ENCODE measurements at regions of chr7 and their contacts with region 1.

Region 1: DNA sequence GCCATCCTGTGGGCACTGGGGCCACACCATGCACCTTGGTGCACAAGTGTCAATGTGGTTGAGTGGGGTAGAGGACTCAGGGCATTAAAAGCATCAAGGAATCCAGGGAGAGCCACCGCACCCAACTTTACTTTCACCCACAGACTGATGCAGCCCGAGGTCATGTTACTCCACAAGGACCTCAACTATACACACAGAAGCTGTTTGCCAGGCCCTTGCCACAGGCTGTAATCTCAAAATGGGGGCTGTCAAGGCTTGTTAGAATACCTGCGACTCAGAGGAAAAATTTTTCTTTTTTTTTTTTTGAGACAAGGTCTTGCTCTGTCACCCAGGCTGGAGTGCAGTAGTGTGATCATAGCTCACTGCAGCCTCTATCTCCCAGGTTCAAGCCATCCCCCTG is 26.5 kb upstream of the KCTD7 start:
- DNase-seq: no peak
- ATAC-seq: no peak
- H3K4me3 ChIP-seq: no peak overlapping the region
- H3K27ac ChIP-seq: no peak overlapping the region
- H3K4me1 ChIP-seq: no peaks in the 10 kb centered on the region
- H3K27me3 ChIP-seq: no peaks in the 10 kb centered on the region
- CTCF ChIP-seq: no peak

Region 2: GRCh38 chr7:66326501-66327180 is 275.5 kb before region 1 on chr7:
- CTCF ChIA-PET with region 1: no interaction called
- POLR2A ChIA-PET with region 1: no interaction called
- in situ Hi-C with region 1: no loop called
- intact Hi-C with region 1: no loop called
- DNase-seq: no peak
- ATAC-seq: peak; percentile 90
- H3K4me3 ChIP-seq: no peak overlapping the region
- H3K27ac ChIP-seq: peak overlapping the region; percentile 64
- H3K4me1 ChIP-seq: peaks cover 9% of the 10 kb centered on the region
- H3K27me3 ChIP-seq: no peaks in the 10 kb centered on the region
- CTCF ChIP-seq: no peak

Region 3: GRCh38 chr7:66627151-66627681 is 25.1 kb after region 1 on chr7:
- CTCF ChIA-PET with region 1: interaction called, 11 read pairs
- POLR2A ChIA-PET with region 1: no interaction called
- in situ Hi-C with region 1: no loop called
- intact Hi-C with region 1: no loop called
- DNase-seq: no peak
- ATAC-seq: no peak
- H3K4me3 ChIP-seq: peak overlapping the region in 1 of 2 experiments; percentile 83; a peak in 2 of 4 replicates
- H3K27ac ChIP-seq: no peak overlapping the region
- H3K4me1 ChIP-seq: peaks cover 4% of the 10 kb centered on the region; the same call in 1 of the 2 replicates
- H3K27me3 ChIP-seq: no peaks in the 10 kb centered on the region
- CTCF ChIP-seq: no peak

Region 4: GRCh38 chr7:66662646-66663264 is 60.6 kb after region 1 on chr7:
- CTCF ChIA-PET with region 1: no interaction called
- POLR2A ChIA-PET with region 1: no interaction called
- in situ Hi-C with region 1: no loop called
- intact Hi-C with region 1: no loop called
- DNase-seq: no peak
- ATAC-seq: no peak
- H3K4me3 ChIP-seq: no peak overlapping the region
- H3K27ac ChIP-seq: no peak overlapping the region
- H3K4me1 ChIP-seq: no peaks in the 10 kb centered on the region
- H3K27me3 ChIP-seq: no peaks in the 10 kb centered on the region
- CTCF ChIP-seq: no peak

Region 5: DNA sequence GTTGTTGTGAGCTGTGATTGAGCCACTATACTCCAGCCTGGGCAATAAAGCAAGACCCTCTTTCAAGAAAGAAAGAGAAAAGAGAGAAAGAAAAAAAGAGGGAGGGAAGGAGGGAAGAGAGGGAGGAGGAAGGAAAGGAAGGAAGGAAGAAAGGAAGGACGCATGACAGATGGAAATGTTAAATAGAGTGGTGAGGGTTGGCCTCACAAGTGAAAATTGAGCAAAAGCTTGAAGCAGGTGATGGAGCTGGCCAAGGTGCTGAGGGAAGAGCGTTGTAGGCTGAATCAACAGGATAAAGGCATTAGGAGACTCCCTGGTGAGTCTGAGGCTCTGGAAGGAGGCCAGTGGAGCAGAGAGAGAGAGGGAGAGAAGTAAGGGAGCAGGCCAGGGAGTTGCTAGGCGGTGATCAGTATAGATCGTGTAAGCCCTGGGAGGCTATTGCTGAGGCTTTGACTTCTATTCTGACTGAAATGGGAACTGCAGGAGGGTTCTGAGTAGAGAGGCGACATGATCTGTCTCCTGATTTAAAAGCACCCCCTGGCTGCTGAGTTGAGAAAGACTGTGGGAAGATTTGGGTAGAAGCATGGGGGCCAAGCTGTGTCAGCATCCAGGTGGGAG is 292.4 kb after region 1 on chr7:
- CTCF ChIA-PET with region 1: no interaction called
- POLR2A ChIA-PET with region 1: interaction called, 14 read pairs
- in situ Hi-C with region 1: no loop called
- intact Hi-C with region 1: no loop called
- DNase-seq: no peak
- ATAC-seq: no peak
- H3K4me3 ChIP-seq: no peak overlapping the region
- H3K27ac ChIP-seq: no peak overlapping the region
- H3K4me1 ChIP-seq: no peaks in the 10 kb centered on the region
- H3K27me3 ChIP-seq: no peaks in the 10 kb centered on the region
- CTCF ChIP-seq: peak; percentile 28; the same call in 1 of the 2 replicates

Region 6: GRCh38 chr7:67371429-67372305 is 769.5 kb after region 1 on chr7:
- CTCF ChIA-PET with region 1: no interaction called
- POLR2A ChIA-PET with region 1: interaction called, 16 read pairs
- in situ Hi-C with region 1: no loop called
- intact Hi-C with region 1: no loop called
- DNase-seq: peak; percentile 69
- ATAC-seq: peak; percentile 97
- H3K4me3 ChIP-seq: no peak overlapping the region
- H3K27ac ChIP-seq: no peak overlapping the region
- H3K4me1 ChIP-seq: no peaks in the 10 kb centered on the region
- H3K27me3 ChIP-seq: no peaks in the 10 kb centered on the region
- CTCF ChIP-seq: peak; percentile 87

Measured in Panc1 (cell line).